Right cardiac atrium (tissue), 5 donors: ENCODE measurements at regions of chr13 and their contacts with region 1.

Region 1: DNA sequence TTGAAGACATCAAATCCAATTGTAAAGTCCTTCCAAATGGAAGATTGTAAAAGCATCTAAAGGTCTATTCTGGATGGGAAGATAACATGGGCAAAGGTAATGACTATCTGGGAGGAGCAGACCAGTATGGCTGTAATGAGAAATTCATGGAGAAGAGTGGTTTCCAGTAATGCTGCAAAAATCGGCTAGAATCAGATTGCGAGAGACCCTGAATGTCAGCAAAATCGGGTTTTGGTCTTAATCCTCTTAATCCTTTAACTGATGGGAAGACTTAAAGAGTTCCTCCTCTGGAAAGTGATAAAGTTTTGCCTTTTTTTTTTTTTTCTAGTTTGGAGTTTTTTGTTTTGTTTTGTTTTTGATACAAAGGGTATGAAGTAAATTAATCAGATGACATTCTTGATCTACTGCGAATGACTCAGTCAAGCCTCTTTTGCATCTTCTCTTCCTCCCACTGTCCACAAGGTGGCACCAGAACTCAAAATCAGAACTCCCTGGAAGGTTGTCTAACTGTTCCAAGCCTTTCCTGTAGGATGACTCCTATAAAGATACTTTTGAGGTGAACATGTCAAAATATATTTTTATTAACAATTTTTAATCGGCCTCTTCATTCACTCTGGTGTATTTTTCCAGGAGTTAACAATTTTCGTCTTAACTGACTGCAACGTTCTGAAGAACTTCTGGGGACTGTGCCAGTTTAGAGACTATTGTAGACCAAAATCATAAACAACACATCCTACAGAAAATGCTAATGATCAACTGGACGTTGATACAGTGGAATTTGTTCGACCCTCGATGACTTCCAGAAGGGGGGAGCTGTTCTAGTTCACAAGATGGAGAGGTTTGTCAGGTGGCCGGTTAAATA is 213.3 kb upstream of the MIR17HG start:
- DNase-seq: no peak
- ATAC-seq: peak; percentile 79 to 84
- H3K4me3 ChIP-seq: no peak overlapping the region
- H3K27ac ChIP-seq: no peak overlapping the region
- H3K4me1 ChIP-seq: no peaks in the 10 kb centered on the region
- H3K27me3 ChIP-seq: no peaks in the 10 kb centered on the region

Region 2: GRCh38 chr13:91185294-91185863 is 51.2 kb after region 1 on chr13:
- intact Hi-C with region 1: loop called in 2 of 4 experiments (anchors 2 to 5 kb)
- DNase-seq: no peak
- ATAC-seq: peak in 1 of 2 donors; percentile 51
- H3K4me3 ChIP-seq: no peak overlapping the region
- H3K27ac ChIP-seq: no peak overlapping the region
- H3K4me1 ChIP-seq: no peaks in the 10 kb centered on the region
- H3K27me3 ChIP-seq: no peaks in the 10 kb centered on the region